Activated CD8-positive, alpha-beta T cell treated with anti-CD3 and anti-CD28 coated beads for 36 hours (primary cell): ENCODE measurements at regions of chr3 and their contacts with region 1.

Region 1: GRCh38 chr3:142828703-142829305 is 60.1 kb downstream of the PCOLCE2 start:
- DNase-seq: peak; percentile 90
- ATAC-seq: peak; percentile 100
- H3K4me3 Mint-ChIP-seq: no peak overlapping the region
- H3K27ac Mint-ChIP-seq: no peak overlapping the region
- H3K4me1 Mint-ChIP-seq: no peaks in the 10 kb centered on the region
- H3K27me3 Mint-ChIP-seq: no peaks in the 10 kb centered on the region
- CTCF ChIP-seq: peak; percentile 73

Region 2: GRCh38 chr3:142215106-142215505 is 613.7 kb before region 1 on chr3:
- CTCF ChIA-PET with region 1: no interaction called
- POLR2A ChIA-PET with region 1: no interaction called
- intact Hi-C with region 1: no loop called
- DNase-seq: no peak
- ATAC-seq: no peak
- H3K4me3 Mint-ChIP-seq: no peak overlapping the region
- H3K27ac Mint-ChIP-seq: no peak overlapping the region
- H3K4me1 Mint-ChIP-seq: peaks cover 12% of the 10 kb centered on the region
- H3K27me3 Mint-ChIP-seq: no peaks in the 10 kb centered on the region
- CTCF ChIP-seq: no peak

Region 3: DNA sequence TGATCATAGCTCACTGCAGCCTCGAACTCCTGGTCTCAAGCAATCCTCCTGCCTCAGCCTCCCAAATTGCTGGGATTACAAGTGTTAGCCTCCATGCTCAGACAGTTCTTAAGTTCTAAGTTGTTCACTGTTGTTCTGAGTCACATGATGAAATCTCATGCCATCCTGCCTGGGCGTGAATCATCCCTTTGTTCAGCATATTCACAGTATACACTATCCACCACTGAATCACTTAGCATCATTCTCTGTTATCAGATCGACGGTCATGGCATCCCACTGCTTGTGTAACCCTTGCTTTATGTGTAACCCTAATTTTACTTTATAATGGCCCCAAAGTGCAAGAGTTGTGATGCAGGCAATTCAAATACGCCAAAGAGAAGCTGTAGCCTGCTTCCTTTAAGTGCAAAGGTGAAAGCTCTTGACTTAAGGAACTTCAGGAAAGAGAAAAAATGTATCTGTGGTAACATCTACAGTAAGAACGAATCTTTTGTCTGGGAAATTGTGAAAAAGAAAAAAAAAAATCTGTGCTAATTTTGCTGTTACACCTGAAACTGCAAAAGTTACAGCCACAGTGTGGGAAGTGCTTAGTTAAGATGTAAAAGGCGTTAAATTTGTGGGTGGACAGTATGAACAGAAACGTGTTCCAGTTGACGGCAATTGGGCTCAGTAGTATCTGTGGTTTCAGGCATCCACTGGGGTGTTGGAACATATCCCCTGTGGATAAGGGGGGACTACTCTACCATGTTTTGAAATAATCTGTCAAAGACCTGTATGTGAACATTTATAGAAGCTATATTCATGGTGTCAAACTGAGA is 20.5 kb before region 1 on chr3:
- CTCF ChIA-PET with region 1: interaction called, 19 read pairs
- POLR2A ChIA-PET with region 1: no interaction called
- intact Hi-C with region 1: no loop called
- DNase-seq: peak; percentile 29
- ATAC-seq: peak; percentile 60
- H3K4me3 Mint-ChIP-seq: no peak overlapping the region
- H3K27ac Mint-ChIP-seq: no peak overlapping the region
- H3K4me1 Mint-ChIP-seq: no peaks in the 10 kb centered on the region
- H3K27me3 Mint-ChIP-seq: peaks cover 3% of the 10 kb centered on the region
- CTCF ChIP-seq: no peak

Region 4: GRCh38 chr3:142846779-142847577 is 18.2 kb after region 1 on chr3:
- CTCF ChIA-PET with region 1: interaction called, 14 read pairs
- POLR2A ChIA-PET with region 1: no interaction called
- intact Hi-C with region 1: no loop called
- DNase-seq: no peak
- ATAC-seq: no peak
- H3K4me3 Mint-ChIP-seq: no peak overlapping the region
- H3K27ac Mint-ChIP-seq: no peak overlapping the region
- H3K4me1 Mint-ChIP-seq: no peaks in the 10 kb centered on the region
- H3K27me3 Mint-ChIP-seq: peaks cover 7% of the 10 kb centered on the region
- CTCF ChIP-seq: no peak

Region 5: DNA sequence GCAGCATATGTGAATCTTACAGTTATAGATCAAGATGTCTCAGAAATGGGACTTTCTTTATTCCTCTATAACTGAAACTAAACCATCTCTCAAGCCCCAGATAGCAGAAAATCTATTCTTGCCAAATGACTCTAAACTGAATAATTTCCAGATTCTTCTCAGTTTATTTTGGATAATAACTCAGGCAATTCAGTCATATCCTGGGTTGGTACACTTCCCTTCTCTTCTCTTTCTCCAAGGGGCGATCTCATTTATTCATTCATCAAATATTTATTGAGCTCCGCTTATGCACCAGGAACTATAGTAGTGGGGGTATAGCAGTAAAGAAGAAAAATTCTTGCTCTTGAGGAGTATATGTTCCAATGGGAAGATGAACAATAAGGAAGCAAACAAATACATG is 73.6 kb after region 1 on chr3:
- CTCF ChIA-PET with region 1: interaction called, 10 read pairs
- POLR2A ChIA-PET with region 1: no interaction called
- intact Hi-C with region 1: no loop called
- DNase-seq: no peak
- ATAC-seq: no peak
- H3K4me3 Mint-ChIP-seq: no peak overlapping the region
- H3K27ac Mint-ChIP-seq: no peak overlapping the region
- H3K4me1 Mint-ChIP-seq: peaks cover 8% of the 10 kb centered on the region
- H3K27me3 Mint-ChIP-seq: peaks cover 25% of the 10 kb centered on the region
- CTCF ChIP-seq: no peak

Region 6: DNA sequence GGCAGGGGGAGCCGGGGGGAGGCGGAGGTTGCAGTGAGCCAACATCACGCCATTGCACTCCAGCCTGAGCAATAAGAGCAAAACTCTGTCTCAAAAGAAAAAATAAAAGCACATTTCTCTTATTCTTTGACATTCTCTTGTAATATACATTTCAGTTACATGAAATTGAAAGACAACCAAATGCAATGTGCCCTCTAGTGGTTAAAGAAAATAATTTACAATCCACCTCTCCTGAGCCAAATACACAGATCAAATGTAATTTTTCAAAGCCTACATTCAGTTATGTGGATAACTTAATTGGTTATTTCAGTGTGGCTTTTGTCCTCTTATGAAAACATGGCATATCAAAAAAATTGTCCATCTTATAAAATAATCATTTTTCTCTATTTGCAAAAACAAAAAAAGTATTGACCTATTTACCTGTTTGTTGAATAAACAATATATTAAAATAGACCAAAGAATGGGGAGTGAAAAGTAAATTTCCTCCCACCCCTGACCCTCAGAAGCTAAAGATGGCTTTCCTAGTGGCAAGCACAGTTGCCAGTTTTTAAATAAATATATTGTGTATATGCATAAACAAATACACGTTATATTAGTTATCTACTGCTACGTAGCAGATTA is 158.4 kb after region 1 on chr3:
- CTCF ChIA-PET with region 1: interaction called, 27 read pairs
- POLR2A ChIA-PET with region 1: no interaction called
- intact Hi-C with region 1: loop called (anchors 5 kb)
- DNase-seq: no peak
- ATAC-seq: no peak
- H3K4me3 Mint-ChIP-seq: no peak overlapping the region
- H3K27ac Mint-ChIP-seq: no peak overlapping the region
- H3K4me1 Mint-ChIP-seq: no peaks in the 10 kb centered on the region
- H3K27me3 Mint-ChIP-seq: peaks cover 6% of the 10 kb centered on the region
- CTCF ChIP-seq: peak; percentile 87

Region 7: DNA sequence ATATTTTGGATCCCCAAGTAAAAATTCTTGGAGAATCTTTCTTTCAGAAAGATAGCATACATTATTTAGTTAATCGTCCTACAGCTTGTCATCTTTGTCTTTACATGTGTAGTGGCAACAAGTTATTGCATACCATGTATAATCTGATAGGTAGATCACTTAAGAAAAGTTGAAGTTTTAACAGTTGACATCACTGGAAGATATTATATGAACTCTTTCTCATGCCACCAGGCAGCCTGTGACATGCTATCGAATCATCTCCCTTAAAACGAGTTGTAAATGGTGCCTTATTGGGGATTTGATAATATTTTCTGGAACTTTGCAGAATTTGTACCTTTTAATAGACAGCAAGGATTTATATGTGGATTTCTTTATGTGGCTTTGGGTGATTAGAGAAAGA is 181.2 kb after region 1 on chr3:
- CTCF ChIA-PET with region 1: interaction called, 10 read pairs
- POLR2A ChIA-PET with region 1: no interaction called
- intact Hi-C with region 1: no loop called
- DNase-seq: no peak
- ATAC-seq: no peak
- H3K4me3 Mint-ChIP-seq: no peak overlapping the region
- H3K27ac Mint-ChIP-seq: peak overlapping the region; percentile 6
- H3K4me1 Mint-ChIP-seq: peaks cover 76% of the 10 kb centered on the region
- H3K27me3 Mint-ChIP-seq: no peaks in the 10 kb centered on the region
- CTCF ChIP-seq: no peak

Region 8: GRCh38 chr3:143119009-143119914 is 290.5 kb after region 1 on chr3 and contains the start of gene CHST2:
- CTCF ChIA-PET with region 1: no interaction called
- POLR2A ChIA-PET with region 1: no interaction called
- intact Hi-C with region 1: no loop called
- DNase-seq: peak; percentile 76
- ATAC-seq: peak; percentile 84
- H3K4me3 Mint-ChIP-seq: peak within 1 kb of the TSS; percentile 87
- H3K27ac Mint-ChIP-seq: peak within 1 kb of the TSS; percentile 68
- H3K4me1 Mint-ChIP-seq: peaks cover 29% of the 10 kb centered on the region
- H3K27me3 Mint-ChIP-seq: peaks cover 5% of the 10 kb centered on the region
- CTCF ChIP-seq: no peak
- total RNA-seq, gene CHST2: 6.0 to 6.9 TPM